Activated CD4-positive, alpha-beta memory T cell treated with anti-CD3 and anti-CD28 coated beads, Interleukin-2, amount 10 ng/mL, durations not matched to agents 7 days and 5 days (primary cell): ENCODE measurements at regions of chr5 and their contacts with region 1.

Region 1: GRCh38 chr5:14581333-14581890 is at the start of gene OTULINL:
- DNase-seq: peak; percentile 88
- H3K4me3 Mint-ChIP-seq: peak within 1 kb of the TSS; percentile 79
- H3K27ac Mint-ChIP-seq: peak within 1 kb of the TSS; percentile 73
- H3K4me1 Mint-ChIP-seq: peaks cover 31% of the 10 kb centered on the region
- H3K27me3 Mint-ChIP-seq: peaks cover 19% of the 10 kb centered on the region
- total RNA-seq, gene OTULINL: 31.1 to 34.6 TPM

Region 2: DNA sequence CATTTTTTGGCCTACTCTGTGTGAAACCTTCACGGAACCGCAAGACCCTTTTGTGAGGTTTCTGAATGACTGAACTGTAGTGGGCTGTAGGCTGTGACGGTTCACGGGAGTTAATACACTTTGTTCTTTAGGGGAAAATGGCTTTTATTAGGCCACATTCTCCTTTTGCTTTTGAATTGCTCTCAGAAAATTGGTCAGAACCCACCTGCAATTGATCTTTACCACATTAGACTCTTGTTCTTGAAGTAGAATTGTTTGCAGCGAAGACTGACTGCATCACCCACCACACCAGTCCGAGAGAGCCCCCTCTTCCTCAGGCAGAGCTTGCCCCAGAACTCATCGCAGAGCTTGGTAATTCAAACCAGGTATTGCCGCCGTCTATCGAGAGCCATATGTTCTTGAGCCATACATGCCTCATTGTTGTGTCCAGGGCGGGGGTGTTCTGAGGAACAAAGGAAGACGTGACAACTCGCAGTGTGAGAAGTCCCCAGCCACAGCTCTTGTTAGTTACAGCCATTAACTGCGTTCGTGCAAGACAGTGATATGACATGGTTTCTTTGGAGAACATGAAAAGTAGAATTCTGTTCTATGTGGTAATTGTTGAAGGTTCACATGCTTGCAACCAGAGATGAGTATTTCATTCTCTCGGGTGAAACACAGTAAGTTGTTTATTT is 166.3 kb before region 1 on chr5:
- CTCF ChIA-PET with region 1: no interaction called
- POLR2A ChIA-PET with region 1: interaction called, 11 read pairs
- DNase-seq: peak; percentile 24
- H3K4me3 Mint-ChIP-seq: peak overlapping the region; percentile 51
- H3K27ac Mint-ChIP-seq: peak overlapping the region; percentile 77
- H3K4me1 Mint-ChIP-seq: peaks cover 46% of the 10 kb centered on the region
- H3K27me3 Mint-ChIP-seq: peaks cover 10% of the 10 kb centered on the region

Region 3: DNA sequence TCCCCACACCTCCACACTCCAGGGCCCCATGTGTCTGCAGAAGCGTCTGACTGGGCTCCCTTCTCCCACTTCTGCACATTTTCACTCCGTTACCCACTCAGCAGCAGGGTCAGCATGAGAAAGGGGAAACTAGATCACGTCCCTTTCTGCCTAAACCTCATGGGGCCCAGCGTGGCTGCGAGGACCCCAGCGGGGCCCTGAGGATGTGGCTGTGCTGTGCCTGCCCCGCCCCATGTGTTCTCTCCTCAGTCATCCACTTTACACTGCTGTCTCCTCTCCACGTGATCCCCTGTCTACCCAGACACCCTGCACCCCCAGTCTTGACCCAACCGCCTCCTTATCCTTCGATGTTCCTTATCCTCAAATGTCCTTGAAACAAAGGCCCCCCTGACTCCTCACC is 59.7 kb before region 1 on chr5:
- CTCF ChIA-PET with region 1: no interaction called
- POLR2A ChIA-PET with region 1: no interaction called
- DNase-seq: no peak
- H3K4me3 Mint-ChIP-seq: no peak overlapping the region
- H3K27ac Mint-ChIP-seq: no peak overlapping the region
- H3K4me1 Mint-ChIP-seq: no peaks in the 10 kb centered on the region
- H3K27me3 Mint-ChIP-seq: peaks cover 5% of the 10 kb centered on the region

Region 4: DNA sequence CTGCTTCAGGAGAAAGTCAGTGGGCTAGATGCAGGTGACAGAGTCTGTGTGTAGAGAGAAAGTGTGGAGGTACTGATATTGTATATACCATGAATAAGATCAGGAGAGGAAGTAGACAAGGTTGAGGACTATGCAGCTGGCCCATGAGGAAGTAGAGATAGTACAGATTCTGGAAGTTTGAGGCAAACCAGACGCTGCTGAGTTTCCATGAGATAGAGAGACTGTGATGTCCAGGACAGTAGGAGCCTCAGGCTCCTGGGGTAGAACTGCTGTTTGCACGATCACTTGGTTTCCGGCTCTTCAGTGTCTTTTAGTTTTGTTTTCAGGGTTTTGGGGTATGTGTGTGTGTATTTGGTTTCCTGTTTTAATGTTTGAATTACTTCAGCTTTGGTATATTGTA is 13.8 kb after region 1 on chr5:
- CTCF ChIA-PET with region 1: interaction called, 42 read pairs
- POLR2A ChIA-PET with region 1: interaction called, 122 read pairs
- DNase-seq: peak; percentile 56
- H3K4me3 Mint-ChIP-seq: peak overlapping the region; percentile 53
- H3K27ac Mint-ChIP-seq: peak overlapping the region; percentile 95
- H3K4me1 Mint-ChIP-seq: peaks cover 84% of the 10 kb centered on the region
- H3K27me3 Mint-ChIP-seq: no peaks in the 10 kb centered on the region